CD4-positive, alpha-beta T cell (primary cell): ENCODE measurements at regions of chr7 and their contacts with region 1.

Region 1: DNA sequence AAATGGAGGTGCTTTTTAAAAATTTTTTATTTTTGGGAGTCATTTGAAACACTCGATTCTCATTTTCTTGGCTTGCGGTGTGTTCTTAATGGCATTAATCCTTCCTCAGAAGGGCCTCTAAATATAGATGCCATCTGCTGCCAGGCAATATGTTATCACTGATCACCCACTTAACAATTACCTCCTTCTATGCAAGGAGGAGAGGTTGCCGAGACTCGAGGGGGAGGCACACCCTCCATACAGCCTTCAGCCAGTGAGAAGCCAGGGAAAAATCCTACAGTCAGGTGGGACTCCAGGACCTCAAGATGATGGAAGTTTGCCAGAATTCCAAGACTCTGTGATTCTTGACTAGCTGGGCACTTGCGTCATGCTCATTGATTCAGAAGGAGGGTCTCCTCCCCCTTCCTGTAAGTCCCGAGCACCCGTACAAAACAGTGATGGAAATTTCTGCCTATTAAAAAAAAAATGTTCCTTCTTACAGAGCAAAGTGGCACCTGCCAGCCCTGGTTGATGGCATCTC is 574.5 kb downstream of the TYW1 start:
- DNase-seq: no peak
- ATAC-seq: no peak
- H3K4me3 ChIP-seq: no peak overlapping the region
- H3K4me3 Mint-ChIP-seq: no peak overlapping the region
- H3K27ac ChIP-seq: no peak overlapping the region
- H3K27ac Mint-ChIP-seq: no peak overlapping the region
- H3K4me1 ChIP-seq: no peaks in the 10 kb centered on the region
- H3K4me1 Mint-ChIP-seq: no peaks in the 10 kb centered on the region
- H3K27me3 ChIP-seq: no peaks in the 10 kb centered on the region
- H3K27me3 Mint-ChIP-seq: no peaks in the 10 kb centered on the region
- CTCF ChIP-seq: no peak

Region 2: DNA sequence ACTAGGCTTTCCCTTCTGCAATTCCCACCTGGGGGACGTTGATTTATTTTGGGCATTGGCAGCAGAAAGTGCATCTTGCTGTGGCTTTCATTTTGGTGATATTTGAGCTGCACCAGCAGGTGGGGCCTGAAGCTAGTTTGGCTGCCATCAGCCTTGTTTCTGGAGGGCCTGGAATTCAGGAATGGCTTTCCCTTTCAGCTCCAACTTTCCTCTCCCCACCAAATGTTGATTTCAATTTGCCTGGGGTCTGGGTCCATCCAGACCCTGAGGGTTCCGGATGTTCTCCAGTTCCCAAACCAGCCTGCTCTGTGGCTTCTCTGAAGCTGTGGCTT is 65.9 kb after region 1 on chr7:
- CTCF ChIA-PET with region 1: no interaction called
- POLR2A ChIA-PET with region 1: no interaction called
- intact Hi-C with region 1: loop called in 1 of 2 experiments (anchors 10 kb)
- DNase-seq: no peak
- ATAC-seq: no peak
- H3K4me3 ChIP-seq: no peak overlapping the region
- H3K4me3 Mint-ChIP-seq: no peak overlapping the region
- H3K27ac ChIP-seq: no peak overlapping the region
- H3K27ac Mint-ChIP-seq: no peak overlapping the region
- H3K4me1 ChIP-seq: no peaks in the 10 kb centered on the region
- H3K4me1 Mint-ChIP-seq: no peaks in the 10 kb centered on the region
- H3K27me3 ChIP-seq: no peaks in the 10 kb centered on the region
- H3K27me3 Mint-ChIP-seq: no peaks in the 10 kb centered on the region
- CTCF ChIP-seq: no peak